PC-9 (cell line): ENCODE measurements at regions of chr5 and their contacts with region 1.

Region 1: DNA sequence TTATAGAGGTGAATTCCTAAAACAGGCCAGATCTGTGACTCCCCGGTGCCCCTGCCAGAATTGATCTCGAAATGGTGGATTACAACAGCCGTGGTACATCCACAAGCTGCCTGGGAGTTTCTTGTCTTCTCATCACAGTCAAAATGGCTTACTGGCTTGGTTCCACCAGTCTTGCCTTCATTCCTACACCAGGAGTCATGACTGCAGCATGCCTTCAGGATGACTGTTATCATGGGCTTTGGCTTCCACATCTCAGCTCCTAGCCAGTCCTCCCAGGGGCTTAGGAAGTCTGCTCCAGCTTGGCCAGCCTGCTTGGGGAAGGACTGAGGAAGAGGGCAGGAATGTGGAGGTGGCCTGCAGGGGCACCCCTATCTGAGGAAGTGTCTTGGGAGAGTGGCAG is 132.9 kb upstream of the NR3C1 start:
- DNase-seq: peak; percentile 78 to 79
- H3K4me3 ChIP-seq: no peak overlapping the region
- H3K27ac ChIP-seq: peak overlapping the region; percentile 17
- H3K4me1 ChIP-seq: peaks cover 15% of the 10 kb centered on the region
- H3K27me3 ChIP-seq: no peaks in the 10 kb centered on the region
- CTCF ChIP-seq: no peak

Region 2: DNA sequence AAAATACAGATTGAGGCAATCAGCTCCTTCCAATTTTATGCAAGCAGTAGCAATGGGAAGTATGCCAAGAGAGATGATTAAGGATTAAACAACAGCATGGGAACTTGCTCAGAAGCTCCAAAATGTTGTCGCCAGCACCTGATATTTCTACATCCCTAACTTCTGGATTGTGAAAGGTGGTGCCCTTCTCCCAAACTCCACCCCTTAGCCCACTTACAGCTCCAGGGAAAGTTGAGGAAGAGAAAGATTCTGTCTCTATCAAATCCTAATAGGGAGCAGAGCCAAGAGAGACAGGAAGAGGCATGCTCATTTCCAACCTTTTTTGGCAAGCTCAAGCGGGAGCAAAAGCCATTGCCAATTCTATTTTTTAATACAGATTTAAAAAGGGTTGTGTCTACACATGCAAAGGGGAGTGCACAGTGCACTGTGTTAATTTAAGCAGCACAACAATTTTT is 40.5 kb before region 1 on chr5:
- CTCF ChIA-PET with region 1: no interaction called
- POLR2A ChIA-PET with region 1: no interaction called
- intact Hi-C with region 1: loop called (anchors 2 kb)
- DNase-seq: peak in 1 of 2 experiments; percentile 58
- H3K4me3 ChIP-seq: no peak overlapping the region
- H3K27ac ChIP-seq: peak overlapping the region; percentile 77
- H3K4me1 ChIP-seq: peaks cover 34% of the 10 kb centered on the region
- H3K27me3 ChIP-seq: no peaks in the 10 kb centered on the region
- CTCF ChIP-seq: no peak

Region 3: DNA sequence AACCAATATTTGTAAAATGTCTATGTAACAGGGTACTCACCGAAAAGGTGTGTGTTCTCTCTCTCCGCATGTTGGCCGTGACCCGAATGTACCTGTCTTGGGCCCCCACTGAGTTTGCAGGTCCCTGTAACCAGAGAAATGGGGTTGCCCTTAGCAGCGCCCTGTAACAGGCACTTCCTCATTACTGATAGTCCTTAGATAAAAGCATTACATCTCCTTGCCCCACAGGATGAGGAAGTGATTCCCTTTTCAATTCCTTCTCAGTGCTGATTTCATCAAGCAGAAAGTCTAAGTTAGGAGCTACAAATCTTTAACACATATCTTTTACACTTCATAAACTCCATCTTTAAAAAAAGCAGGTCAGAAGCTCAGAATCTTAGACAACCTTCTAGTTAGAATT is 260.4 kb after region 1 on chr5:
- CTCF ChIA-PET with region 1: no interaction called
- POLR2A ChIA-PET with region 1: no interaction called
- intact Hi-C with region 1: no loop called
- DNase-seq: no peak
- H3K4me3 ChIP-seq: no peak overlapping the region
- H3K27ac ChIP-seq: no peak overlapping the region
- H3K4me1 ChIP-seq: no peaks in the 10 kb centered on the region
- H3K27me3 ChIP-seq: no peaks in the 10 kb centered on the region
- CTCF ChIP-seq: no peak